HCT116 (cell line): ENCODE measurements at regions of chr2 and their contacts with region 1.

Region 1: GRCh38 chr2:219155054-219155644 is 5.5 kb downstream of the NHEJ1 start:
- DNase-seq: peak; percentile 78
- ATAC-seq: peak; percentile 72
- H3K4me3 ChIP-seq: no peak overlapping the region
- H3K27ac ChIP-seq: no peak overlapping the region
- H3K4me1 ChIP-seq: peaks cover 0 to 6% of the 10 kb centered on the region in 2 experiments; a peak in 2 of 4 replicates
- H3K27me3 ChIP-seq: no peaks in the 10 kb centered on the region
- CTCF ChIP-seq: peak; percentile 25 to 93 (median 53)
- POLR2A ChIP-seq: no peak
- RAD21 ChIP-seq: peak; percentile 94

Region 2: GRCh38 chr2:218995972-218996711 is 159.0 kb before region 1 on chr2:
- CTCF ChIA-PET with region 1: interaction called, 17 read pairs
- POLR2A ChIA-PET with region 1: interaction called, 5 read pairs
- RAD21 ChIA-PET with region 1: interaction called in 1 of 2 experiments, 3 read pairs
- intact Hi-C with region 1: loop called (anchors 2 kb)
- DNase-seq: peak; percentile 67
- ATAC-seq: peak; percentile 94
- H3K4me3 ChIP-seq: peak overlapping the region; percentile 45 to 57
- H3K27ac ChIP-seq: no peak overlapping the region; the same call in 1 of the 2 replicates
- H3K4me1 ChIP-seq: peaks cover 0 to 23% of the 10 kb centered on the region in 2 experiments; a peak in 3 of 4 replicates
- H3K27me3 ChIP-seq: no peaks in the 10 kb centered on the region
- CTCF ChIP-seq: peak in 2 of 3 experiments; percentile 89 to 91; a peak in 4 of 6 replicates
- POLR2A ChIP-seq: no peak
- RAD21 ChIP-seq: no peak

Region 3: DNA sequence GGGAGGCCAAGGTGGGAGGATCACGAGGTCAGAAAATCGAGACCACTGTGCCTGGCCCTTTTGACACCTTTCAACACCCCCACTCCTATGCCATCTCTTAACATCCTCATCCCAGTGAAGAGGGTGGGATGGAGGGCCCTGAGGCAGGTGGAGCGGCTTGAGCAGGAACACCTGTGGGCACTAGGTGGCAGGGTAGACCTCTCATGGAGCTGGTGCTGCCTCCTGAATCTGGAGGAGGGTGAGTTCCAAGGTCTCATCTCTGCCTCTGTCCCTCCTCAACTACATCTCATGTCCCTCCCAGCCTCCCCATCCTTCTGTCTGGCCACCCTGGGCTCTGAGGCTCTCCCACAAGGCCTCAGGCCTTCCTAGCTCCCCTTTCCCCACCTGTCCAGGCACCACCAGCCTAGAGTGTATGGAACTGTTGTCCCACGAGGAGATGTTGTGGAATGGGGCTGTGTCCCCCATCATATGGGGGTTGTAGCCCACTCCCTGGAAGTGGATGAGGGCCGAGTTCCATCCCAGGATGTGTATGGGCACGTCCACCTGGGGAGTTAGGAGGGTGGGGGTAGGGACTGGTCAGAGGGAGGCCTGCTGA is 144.9 kb before region 1 on chr2:
- CTCF ChIA-PET with region 1: interaction called, 30 read pairs
- POLR2A ChIA-PET with region 1: no interaction called
- RAD21 ChIA-PET with region 1: interaction called in 1 of 2 experiments, 4 read pairs
- intact Hi-C with region 1: no loop called
- DNase-seq: no peak
- ATAC-seq: peak; percentile 100
- H3K4me3 ChIP-seq: no peak overlapping the region
- H3K27ac ChIP-seq: no peak overlapping the region
- H3K4me1 ChIP-seq: no peaks in the 10 kb centered on the region
- H3K27me3 ChIP-seq: no peaks in the 10 kb centered on the region
- CTCF ChIP-seq: peak; percentile 61 to 78 (median 67)
- POLR2A ChIP-seq: no peak
- RAD21 ChIP-seq: peak; percentile 70

Region 4: GRCh38 chr2:219057709-219058540 is 97.2 kb before region 1 on chr2:
- CTCF ChIA-PET with region 1: interaction called, 45 read pairs
- POLR2A ChIA-PET with region 1: interaction called, 3 read pairs
- RAD21 ChIA-PET with region 1: interaction called, 8 to 12 read pairs
- intact Hi-C with region 1: loop called (anchors 1 kb)
- DNase-seq: peak; percentile 26
- ATAC-seq: peak; percentile 97
- H3K4me3 ChIP-seq: no peak overlapping the region
- H3K27ac ChIP-seq: no peak overlapping the region
- H3K4me1 ChIP-seq: no peaks in the 10 kb centered on the region
- H3K27me3 ChIP-seq: peaks cover 16% of the 10 kb centered on the region; the same call in 1 of the 2 replicates
- CTCF ChIP-seq: peak; percentile 83 to 92 (median 87)
- POLR2A ChIP-seq: no peak
- RAD21 ChIP-seq: peak; percentile 96

Region 5: GRCh38 chr2:219104107-219105035 is 50.8 kb before region 1 on chr2:
- CTCF ChIA-PET with region 1: interaction called, 9 read pairs
- POLR2A ChIA-PET with region 1: no interaction called
- RAD21 ChIA-PET with region 1: no interaction called
- intact Hi-C with region 1: loop called (anchors 1 kb)
- DNase-seq: peak; percentile 33
- ATAC-seq: peak; percentile 93
- H3K4me3 ChIP-seq: no peak overlapping the region
- H3K27ac ChIP-seq: no peak overlapping the region
- H3K4me1 ChIP-seq: no peaks in the 10 kb centered on the region
- H3K27me3 ChIP-seq: no peaks in the 10 kb centered on the region
- CTCF ChIP-seq: peak; percentile 77 to 93 (median 92)
- POLR2A ChIP-seq: no peak
- RAD21 ChIP-seq: peak; percentile 62